Right lobe of liver (tissue), 6 donors: ENCODE measurements at regions of chr14 and their contacts with region 1.

Region 1: DNA sequence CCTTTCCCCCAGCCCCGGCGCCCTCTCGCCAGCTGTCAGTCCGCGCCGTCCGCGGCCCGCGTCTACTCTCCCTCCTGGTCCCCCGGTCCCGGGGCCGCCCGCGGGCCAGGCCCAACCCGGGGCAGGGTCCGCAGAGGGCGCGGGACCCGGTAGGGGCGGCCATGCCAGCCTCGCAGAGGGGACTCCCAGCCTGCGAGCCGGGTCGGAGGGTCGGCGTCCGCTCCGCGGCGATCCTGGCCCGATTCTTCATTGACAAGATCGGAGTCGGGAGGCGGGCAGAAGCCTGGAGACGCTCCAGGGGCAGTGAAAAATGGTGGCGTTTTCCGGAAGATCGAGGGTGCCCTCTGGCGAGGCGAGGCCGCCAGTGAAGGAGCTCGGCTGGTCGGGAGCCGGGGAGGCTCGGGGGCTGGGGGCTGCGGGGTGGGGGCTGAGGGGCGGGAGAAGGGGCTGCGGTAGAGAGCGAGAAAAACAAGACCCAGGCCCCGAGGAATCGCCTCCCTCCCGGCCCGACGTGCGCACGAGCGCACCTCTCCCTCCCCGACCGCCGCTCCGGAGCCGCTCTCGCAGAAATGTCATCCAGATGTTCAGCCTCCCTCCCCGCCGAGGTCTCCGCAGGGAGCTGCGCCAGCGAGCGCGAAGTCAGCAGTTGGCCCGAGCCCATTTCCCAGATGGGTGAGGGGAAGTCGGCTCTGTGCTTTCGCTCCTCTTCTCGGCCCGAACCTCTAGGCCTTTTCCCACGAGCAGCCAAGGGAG is 647 bp upstream of the TGFB3 start:
- DNase-seq: peak; percentile 84 to 88 (median 87)
- ATAC-seq: peak; percentile 53 to 79 (median 74)
- H3K4me3 ChIP-seq: peak overlapping the region; percentile 56 to 67 (median 66)
- H3K27ac ChIP-seq: peak overlapping the region; percentile 82 to 94 (median 84)
- H3K4me1 ChIP-seq: peaks cover 0 to 33% (median 15%) of the 10 kb centered on the region in 4 donors
- H3K27me3 ChIP-seq: no peaks in the 10 kb centered on the region
- CTCF ChIP-seq: peak; percentile 28 to 61 (median 56)
- POLR2A ChIP-seq: no peak

Region 2: DNA sequence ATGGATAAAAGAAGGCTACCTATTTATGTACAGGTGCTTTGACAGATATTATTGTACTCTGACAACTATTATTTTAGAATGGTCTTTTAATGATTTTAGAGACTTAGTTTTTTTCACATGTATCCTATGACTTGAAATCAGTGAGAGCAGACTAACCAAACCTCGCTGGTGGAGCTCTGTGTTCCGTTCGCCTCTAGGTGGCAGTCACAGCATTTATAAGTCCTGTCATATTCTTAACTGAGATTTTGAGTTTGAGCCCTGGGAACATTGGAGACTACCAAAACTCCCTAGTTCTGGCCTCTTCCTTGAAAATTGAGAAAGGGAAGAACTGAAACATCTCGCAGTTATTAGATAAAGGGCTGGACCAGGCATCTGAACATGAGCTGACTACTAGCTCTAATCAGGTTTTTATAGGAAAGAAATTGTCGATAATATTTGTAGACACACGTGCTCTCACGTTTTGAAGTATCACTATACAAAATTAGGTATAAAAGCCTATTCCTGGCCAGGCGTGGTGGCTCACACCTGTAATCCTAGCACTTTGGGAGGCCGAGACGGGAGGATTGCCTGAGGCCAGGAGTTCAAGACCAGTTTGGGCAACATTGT is 273.1 kb before region 1 on chr14:
- intact Hi-C with region 1: loop called (anchors 5 to 10 kb)
- DNase-seq: peak; percentile 60 to 75 (median 66)
- ATAC-seq: peak; percentile 66 to 85 (median 81)
- H3K4me3 ChIP-seq: no peak overlapping the region
- H3K27ac ChIP-seq: no peak overlapping the region
- H3K4me1 ChIP-seq: peaks cover 0 to 17% (median 3%) of the 10 kb centered on the region in 4 donors
- H3K27me3 ChIP-seq: no peaks in the 10 kb centered on the region
- CTCF ChIP-seq: peak; percentile 73 to 85 (median 78)
- POLR2A ChIP-seq: no peak

Region 3: DNA sequence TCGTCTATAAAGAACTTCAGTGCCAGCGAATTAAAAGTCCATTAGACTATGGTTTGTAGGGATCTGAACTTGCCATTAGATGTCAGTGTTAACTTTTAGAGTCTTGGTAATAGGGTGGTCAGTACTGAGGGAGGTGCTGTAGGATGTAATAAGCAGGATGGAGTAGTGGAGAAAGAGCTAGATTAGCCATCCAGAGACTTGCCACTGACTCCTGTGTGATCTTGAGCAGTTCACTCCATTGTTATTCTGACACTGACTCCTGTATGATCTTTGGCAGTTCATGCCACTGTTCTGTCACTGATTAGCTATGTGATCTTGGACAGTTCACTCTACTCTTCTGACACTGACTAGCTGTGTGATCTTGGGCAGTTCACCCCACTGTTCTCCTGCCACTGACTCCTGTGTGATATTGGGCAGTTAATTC is 187.8 kb before region 1 on chr14:
- intact Hi-C with region 1: no loop called
- DNase-seq: no peak
- ATAC-seq: peak; percentile 35 to 85 (median 72)
- H3K4me3 ChIP-seq: no peak overlapping the region
- H3K27ac ChIP-seq: no peak overlapping the region
- H3K4me1 ChIP-seq: no peaks in the 10 kb centered on the region
- H3K27me3 ChIP-seq: no peaks in the 10 kb centered on the region
- CTCF ChIP-seq: peak in 3 of 4 donors; percentile 17 to 24 (median 17)
- POLR2A ChIP-seq: no peak

Region 4: GRCh38 chr14:75906676-75907280 is 75.7 kb before region 1 on chr14:
- intact Hi-C with region 1: loop called (anchors 5 to 10 kb)
- DNase-seq: peak in 2 of 3 donors; percentile 52 to 63
- ATAC-seq: peak; percentile 70 to 82 (median 78)
- H3K4me3 ChIP-seq: no peak overlapping the region
- H3K27ac ChIP-seq: no peak overlapping the region
- H3K4me1 ChIP-seq: peaks cover 0 to 3% (median 0%) of the 10 kb centered on the region in 4 donors
- H3K27me3 ChIP-seq: no peaks in the 10 kb centered on the region
- CTCF ChIP-seq: peak; percentile 91 to 96 (median 94)
- POLR2A ChIP-seq: no peak

Region 5: GRCh38 chr14:76067536-76067935 is 85.1 kb after region 1 on chr14:
- intact Hi-C with region 1: no loop called
- DNase-seq: no peak
- ATAC-seq: no peak
- H3K4me3 ChIP-seq: no peak overlapping the region
- H3K27ac ChIP-seq: no peak overlapping the region
- H3K4me1 ChIP-seq: no peaks in the 10 kb centered on the region
- H3K27me3 ChIP-seq: no peaks in the 10 kb centered on the region
- CTCF ChIP-seq: no peak
- POLR2A ChIP-seq: no peak